ENCODE measurements at regions of chr22 and their contacts with region 1.

Region 1: GRCh38 chr22:41800348-41801146 is at the start of gene CCDC134:
- DNase-seq: peak; percentile 88 to 93
- H3K4me3 ChIP-seq: peak within 1 kb of the TSS; percentile 82
- H3K4me3 Mint-ChIP-seq: peak within 1 kb of the TSS; percentile 89
- H3K27ac Mint-ChIP-seq: peak within 1 kb of the TSS; percentile 91
- H3K4me1 ChIP-seq: peaks cover 6% of the 10 kb centered on the region; the same call in 1 of the 2 replicates
- H3K4me1 Mint-ChIP-seq: peaks cover 7% of the 10 kb centered on the region
- H3K27me3 ChIP-seq: no peaks in the 10 kb centered on the region
- H3K27me3 Mint-ChIP-seq: no peaks in the 10 kb centered on the region
- CTCF ChIP-seq: no peak
- total RNA-seq, gene CCDC134: 24.3 and 24.8 TPM in 2 replicates

Region 2: DNA sequence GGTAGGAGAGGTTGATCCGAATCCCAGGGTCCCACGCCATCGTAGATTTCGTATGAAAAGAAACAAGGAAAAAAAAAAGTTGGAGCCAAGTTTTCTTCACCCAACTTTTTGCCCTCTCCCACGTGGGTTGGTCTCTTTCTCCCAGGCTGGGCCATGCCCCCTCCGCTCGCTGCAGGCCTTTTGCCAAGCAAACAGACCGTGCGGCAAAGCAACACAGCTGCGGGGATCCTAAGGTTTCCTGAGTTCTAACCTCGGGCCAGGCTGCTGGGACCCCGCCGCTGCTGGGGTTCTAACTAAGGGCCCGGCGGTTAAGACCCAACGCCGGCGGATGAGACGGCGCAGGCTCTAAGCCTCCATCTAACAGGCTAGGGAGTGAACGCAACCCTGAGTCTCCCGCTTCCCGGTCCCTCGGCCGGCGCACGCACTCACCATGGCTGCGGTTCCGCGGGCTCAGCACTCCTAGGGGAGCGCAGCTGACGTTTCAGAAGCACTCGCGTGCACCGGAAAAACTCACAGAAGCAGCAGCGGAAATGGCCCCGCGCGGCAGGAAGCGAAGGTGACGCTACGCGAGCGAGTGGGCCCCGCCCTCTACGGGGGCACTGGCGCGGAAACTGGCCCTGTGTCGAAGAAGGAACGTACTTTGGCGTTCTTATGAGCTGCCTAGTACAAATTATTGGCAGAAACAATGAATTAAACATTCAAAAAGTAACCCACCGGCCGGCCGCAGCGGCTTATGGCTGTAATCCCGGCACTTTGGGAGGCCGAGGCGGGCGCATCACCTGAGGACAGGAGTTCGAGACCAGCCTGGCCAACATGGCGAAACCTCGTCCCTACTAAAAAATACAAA is 112.0 kb before region 1 on chr22 and contains the start of gene SNU13:
- CTCF ChIA-PET with region 1: no interaction called
- POLR2A ChIA-PET with region 1: interaction called, 11 read pairs
- intact Hi-C with region 1: no loop called
- DNase-seq: peak; percentile 90 to 91
- H3K4me3 ChIP-seq: peak within 1 kb of the TSS; percentile 67
- H3K4me3 Mint-ChIP-seq: peak within 1 kb of the TSS; percentile 97
- H3K27ac Mint-ChIP-seq: peak within 1 kb of the TSS; percentile 96
- H3K4me1 ChIP-seq: peaks cover 6% of the 10 kb centered on the region; the same call in 1 of the 2 replicates
- H3K4me1 Mint-ChIP-seq: no peaks in the 10 kb centered on the region
- H3K27me3 ChIP-seq: no peaks in the 10 kb centered on the region
- H3K27me3 Mint-ChIP-seq: no peaks in the 10 kb centered on the region
- CTCF ChIP-seq: no peak
- total RNA-seq, gene SNU13: 172 and 187 TPM in 2 replicates

Region 3: GRCh38 chr22:41746567-41747400 is 53.8 kb before region 1 on chr22:
- CTCF ChIA-PET with region 1: interaction called, 56 read pairs
- POLR2A ChIA-PET with region 1: interaction called, 8 read pairs
- intact Hi-C with region 1: loop called (anchors 1 kb)
- DNase-seq: peak; percentile 80 to 84
- H3K4me3 ChIP-seq: no peak overlapping the region
- H3K4me3 Mint-ChIP-seq: no peak overlapping the region
- H3K27ac Mint-ChIP-seq: no peak overlapping the region
- H3K4me1 ChIP-seq: no peaks in the 10 kb centered on the region
- H3K4me1 Mint-ChIP-seq: no peaks in the 10 kb centered on the region
- H3K27me3 ChIP-seq: no peaks in the 10 kb centered on the region
- H3K27me3 Mint-ChIP-seq: peaks cover 3% of the 10 kb centered on the region
- CTCF ChIP-seq: peak; percentile 62 to 91

Region 4: GRCh38 chr22:41832553-41833368 is 32.2 kb after region 1 on chr22 and contains the start of gene SREBF2:
- CTCF ChIA-PET with region 1: no interaction called
- POLR2A ChIA-PET with region 1: interaction called, 22 read pairs
- intact Hi-C with region 1: no loop called
- DNase-seq: peak; percentile 99 to 100
- H3K4me3 ChIP-seq: peak within 1 kb of the TSS; percentile 94
- H3K4me3 Mint-ChIP-seq: peak within 1 kb of the TSS; percentile 98
- H3K27ac Mint-ChIP-seq: peak within 1 kb of the TSS; percentile 95
- H3K4me1 ChIP-seq: peaks cover 11% of the 10 kb centered on the region
- H3K4me1 Mint-ChIP-seq: peaks cover 14% of the 10 kb centered on the region
- H3K27me3 ChIP-seq: no peaks in the 10 kb centered on the region
- H3K27me3 Mint-ChIP-seq: no peaks in the 10 kb centered on the region
- CTCF ChIP-seq: no peak
- total RNA-seq, gene SREBF2: 134 and 150 TPM in 2 replicates

Region 5: GRCh38 chr22:41841085-41841659 is 40.6 kb after region 1 on chr22:
- CTCF ChIA-PET with region 1: interaction called, 3 read pairs
- POLR2A ChIA-PET with region 1: interaction called, 4 read pairs
- intact Hi-C with region 1: loop called (anchors 1 kb)
- DNase-seq: peak in 1 of 2 experiments; percentile 69
- H3K4me3 ChIP-seq: no peak overlapping the region
- H3K4me3 Mint-ChIP-seq: peak overlapping the region; percentile 37
- H3K27ac Mint-ChIP-seq: peak overlapping the region; percentile 89
- H3K4me1 ChIP-seq: peaks cover 71% of the 10 kb centered on the region
- H3K4me1 Mint-ChIP-seq: peaks cover 52% of the 10 kb centered on the region
- H3K27me3 ChIP-seq: no peaks in the 10 kb centered on the region
- H3K27me3 Mint-ChIP-seq: no peaks in the 10 kb centered on the region
- CTCF ChIP-seq: no peak

Region 6: GRCh38 chr22:41940832-41941765 is 140.6 kb after region 1 on chr22:
- CTCF ChIA-PET with region 1: interaction called, 10 read pairs
- POLR2A ChIA-PET with region 1: no interaction called
- intact Hi-C with region 1: no loop called
- DNase-seq: peak; percentile 80 to 87
- H3K4me3 ChIP-seq: no peak overlapping the region
- H3K4me3 Mint-ChIP-seq: no peak overlapping the region
- H3K27ac Mint-ChIP-seq: no peak overlapping the region
- H3K4me1 ChIP-seq: no peaks in the 10 kb centered on the region
- H3K4me1 Mint-ChIP-seq: peaks cover 7% of the 10 kb centered on the region
- H3K27me3 ChIP-seq: no peaks in the 10 kb centered on the region
- H3K27me3 Mint-ChIP-seq: no peaks in the 10 kb centered on the region
- CTCF ChIP-seq: peak; percentile 82 to 85

Region 7: GRCh38 chr22:41946629-41947423 is 146.3 kb after region 1 on chr22 and contains the start of gene CENPM:
- CTCF ChIA-PET with region 1: interaction called, 6 read pairs
- POLR2A ChIA-PET with region 1: interaction called, 16 read pairs
- intact Hi-C with region 1: no loop called
- DNase-seq: peak; percentile 96 to 97
- H3K4me3 ChIP-seq: peak within 1 kb of the TSS; percentile 47
- H3K4me3 Mint-ChIP-seq: peak within 1 kb of the TSS; percentile 93
- H3K27ac Mint-ChIP-seq: peak within 1 kb of the TSS; percentile 81
- H3K4me1 ChIP-seq: peaks cover 11% of the 10 kb centered on the region
- H3K4me1 Mint-ChIP-seq: peaks cover 13% of the 10 kb centered on the region
- H3K27me3 ChIP-seq: no peaks in the 10 kb centered on the region
- H3K27me3 Mint-ChIP-seq: no peaks in the 10 kb centered on the region
- CTCF ChIP-seq: peak in 1 of 2 experiments; percentile 6
- total RNA-seq, gene CENPM: 44.1 and 46.4 TPM in 2 replicates